PC-9 (cell line): ENCODE measurements at regions of chr11 and their contacts with region 1.

Region 1: GRCh38 chr11:66950113-66950535 is 8.1 kb downstream of the PC start:
- DNase-seq: peak; percentile 94 to 99
- H3K4me3 ChIP-seq: no peak overlapping the region
- H3K27ac ChIP-seq: peak overlapping the region; percentile 72
- H3K4me1 ChIP-seq: peaks cover 18% of the 10 kb centered on the region
- H3K27me3 ChIP-seq: no peaks in the 10 kb centered on the region
- CTCF ChIP-seq: no peak

Region 2: GRCh38 chr11:66443602-66444001 is 506.5 kb before region 1 on chr11:
- CTCF ChIA-PET with region 1: no interaction called
- POLR2A ChIA-PET with region 1: no interaction called
- intact Hi-C with region 1: no loop called
- DNase-seq: peak in 1 of 2 experiments; percentile 95
- H3K4me3 ChIP-seq: no peak overlapping the region
- H3K27ac ChIP-seq: peak overlapping the region; percentile 69
- H3K4me1 ChIP-seq: peaks cover 14% of the 10 kb centered on the region
- H3K27me3 ChIP-seq: no peaks in the 10 kb centered on the region
- CTCF ChIP-seq: no peak

Region 3: DNA sequence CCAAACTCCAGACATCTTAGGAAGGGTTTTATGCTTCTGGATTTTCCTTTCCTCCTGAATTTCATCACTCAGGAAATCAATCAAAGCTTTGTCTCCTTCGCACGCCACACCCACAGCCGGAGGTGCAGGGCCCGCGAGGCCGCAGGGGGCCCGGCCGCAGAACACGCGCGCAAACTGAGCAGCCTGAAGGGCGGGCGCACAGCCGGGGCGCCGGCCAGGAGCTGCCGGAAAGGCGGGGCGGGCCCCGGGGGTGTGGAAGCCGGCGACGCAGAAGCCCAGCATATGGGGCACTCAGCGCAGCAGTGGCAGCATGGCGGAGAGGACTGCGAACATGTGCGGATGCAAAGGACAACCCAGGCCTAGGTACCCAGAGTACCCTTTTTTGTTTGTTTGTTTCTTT is 188.0 kb before region 1 on chr11:
- CTCF ChIA-PET with region 1: no interaction called
- POLR2A ChIA-PET with region 1: no interaction called
- intact Hi-C with region 1: no loop called
- DNase-seq: no peak
- H3K4me3 ChIP-seq: no peak overlapping the region
- H3K27ac ChIP-seq: no peak overlapping the region
- H3K4me1 ChIP-seq: no peaks in the 10 kb centered on the region
- H3K27me3 ChIP-seq: no peaks in the 10 kb centered on the region
- CTCF ChIP-seq: no peak

Region 4: GRCh38 chr11:66855574-66856495 is 94.3 kb before region 1 on chr11:
- CTCF ChIA-PET with region 1: no interaction called
- POLR2A ChIA-PET with region 1: interaction called, 3 read pairs
- intact Hi-C with region 1: loop called (anchors 1 kb)
- DNase-seq: peak; percentile 80 to 98
- H3K4me3 ChIP-seq: peak overlapping the region; percentile 99
- H3K27ac ChIP-seq: peak overlapping the region; percentile 33
- H3K4me1 ChIP-seq: peaks cover 13% of the 10 kb centered on the region
- H3K27me3 ChIP-seq: no peaks in the 10 kb centered on the region
- CTCF ChIP-seq: no peak

Region 5: GRCh38 chr11:66970808-66971442 is 20.8 kb after region 1 on chr11:
- CTCF ChIA-PET with region 1: no interaction called
- POLR2A ChIA-PET with region 1: no interaction called
- intact Hi-C with region 1: no loop called
- DNase-seq: peak; percentile 72 to 99
- H3K4me3 ChIP-seq: peak overlapping the region; percentile 13; the same call in 1 of the 2 replicates
- H3K27ac ChIP-seq: peak overlapping the region; percentile 83
- H3K4me1 ChIP-seq: peaks cover 77% of the 10 kb centered on the region
- H3K27me3 ChIP-seq: no peaks in the 10 kb centered on the region
- CTCF ChIP-seq: no peak

Region 6: DNA sequence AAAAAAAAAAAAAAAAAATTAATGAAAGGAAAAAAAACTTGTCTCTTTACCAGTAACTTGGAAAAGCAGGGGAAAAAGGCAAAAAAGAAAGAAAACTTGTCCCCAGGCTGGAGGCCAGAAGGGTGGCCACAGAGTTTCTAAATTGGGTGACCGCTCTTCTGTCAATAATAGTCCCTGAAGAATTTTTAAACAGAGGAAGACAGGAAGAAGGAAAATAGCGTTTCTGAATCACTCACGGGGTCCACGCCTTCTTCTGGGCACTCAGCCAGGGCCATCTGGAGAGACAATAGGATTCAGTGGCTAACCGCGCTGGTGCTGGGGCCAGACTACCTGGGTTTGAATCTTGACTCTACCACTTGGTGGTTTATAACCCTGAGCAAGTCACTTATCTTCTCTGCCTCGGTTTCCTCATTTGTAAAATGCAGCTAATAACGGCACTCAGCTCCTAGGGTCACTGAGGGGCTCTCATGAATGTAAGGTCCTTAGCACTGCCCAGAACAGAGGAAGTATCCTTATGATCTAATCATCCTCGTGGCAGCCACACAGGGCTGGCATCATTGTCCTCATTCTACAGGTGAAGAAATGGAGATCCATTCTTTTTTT is 32.0 kb after region 1 on chr11:
- CTCF ChIA-PET with region 1: no interaction called
- POLR2A ChIA-PET with region 1: interaction called, 11 read pairs
- intact Hi-C with region 1: no loop called
- DNase-seq: peak; percentile 93 to 95
- H3K4me3 ChIP-seq: no peak overlapping the region
- H3K27ac ChIP-seq: peak overlapping the region; percentile 25; the same call in 1 of the 2 replicates
- H3K4me1 ChIP-seq: peaks cover 31% of the 10 kb centered on the region
- H3K27me3 ChIP-seq: no peaks in the 10 kb centered on the region
- CTCF ChIP-seq: no peak